Caco-2 (cell line): ENCODE measurements at regions of chr20 and their contacts with region 1.

Region 1: GRCh38 chr20:33992923-33993575 is 662 bp upstream of the RALY start:
- DNase-seq: peak; percentile 100
- H3K4me3 ChIP-seq: peak overlapping the region; percentile 88
- H3K4me3 Mint-ChIP-seq: peak overlapping the region; percentile 76
- H3K27ac Mint-ChIP-seq: peak overlapping the region; percentile 89
- H3K4me1 ChIP-seq: peaks cover 17% of the 10 kb centered on the region
- H3K4me1 Mint-ChIP-seq: peaks cover 3% of the 10 kb centered on the region
- H3K27me3 ChIP-seq: no peaks in the 10 kb centered on the region
- H3K27me3 Mint-ChIP-seq: no peaks in the 10 kb centered on the region
- CTCF ChIP-seq: no peak

Region 2: GRCh38 chr20:33666293-33667244 is 326.5 kb before region 1 on chr20 and contains the start of gene ACTL10:
- CTCF ChIA-PET with region 1: no interaction called
- POLR2A ChIA-PET with region 1: interaction called, 11 read pairs
- intact Hi-C with region 1: no loop called
- DNase-seq: peak; percentile 100
- H3K4me3 ChIP-seq: peak within 1 kb of the TSS; percentile 78
- H3K4me3 Mint-ChIP-seq: peak within 1 kb of the TSS; percentile 84
- H3K27ac Mint-ChIP-seq: peak within 1 kb of the TSS; percentile 85
- H3K4me1 ChIP-seq: peaks cover 25% of the 10 kb centered on the region
- H3K4me1 Mint-ChIP-seq: peaks cover 24% of the 10 kb centered on the region
- H3K27me3 ChIP-seq: no peaks in the 10 kb centered on the region
- H3K27me3 Mint-ChIP-seq: no peaks in the 10 kb centered on the region
- CTCF ChIP-seq: peak; percentile 19 to 64
- total RNA-seq, gene ACTL10: 3.4 and 4.5 TPM in 2 replicates

Region 3: GRCh38 chr20:33781133-33781532 is 211.9 kb before region 1 on chr20:
- CTCF ChIA-PET with region 1: no interaction called
- POLR2A ChIA-PET with region 1: interaction called, 11 read pairs
- intact Hi-C with region 1: no loop called
- DNase-seq: no peak
- H3K4me3 ChIP-seq: no peak overlapping the region
- H3K4me3 Mint-ChIP-seq: no peak overlapping the region
- H3K27ac Mint-ChIP-seq: no peak overlapping the region
- H3K4me1 ChIP-seq: peaks cover 13% of the 10 kb centered on the region
- H3K4me1 Mint-ChIP-seq: peaks cover 25% of the 10 kb centered on the region
- H3K27me3 ChIP-seq: no peaks in the 10 kb centered on the region
- H3K27me3 Mint-ChIP-seq: no peaks in the 10 kb centered on the region
- CTCF ChIP-seq: peak in 1 of 2 experiments; percentile 18

Region 4: GRCh38 chr20:33909331-33909921 is 83.6 kb before region 1 on chr20:
- CTCF ChIA-PET with region 1: interaction called, 5 read pairs
- POLR2A ChIA-PET with region 1: interaction called, 3 read pairs
- intact Hi-C with region 1: loop called (anchors 1 kb)
- DNase-seq: peak; percentile 86 to 88
- H3K4me3 ChIP-seq: no peak overlapping the region
- H3K4me3 Mint-ChIP-seq: peak overlapping the region; percentile 2
- H3K27ac Mint-ChIP-seq: peak overlapping the region; percentile 87
- H3K4me1 ChIP-seq: peaks cover 39% of the 10 kb centered on the region
- H3K4me1 Mint-ChIP-seq: peaks cover 41% of the 10 kb centered on the region
- H3K27me3 ChIP-seq: no peaks in the 10 kb centered on the region
- H3K27me3 Mint-ChIP-seq: no peaks in the 10 kb centered on the region
- CTCF ChIP-seq: no peak

Region 5: GRCh38 chr20:34022154-34022838 is 29.2 kb after region 1 on chr20:
- CTCF ChIA-PET with region 1: interaction called, 16 read pairs
- POLR2A ChIA-PET with region 1: interaction called, 15 read pairs
- intact Hi-C with region 1: no loop called
- DNase-seq: peak in 1 of 2 experiments; percentile 65
- H3K4me3 ChIP-seq: no peak overlapping the region
- H3K4me3 Mint-ChIP-seq: no peak overlapping the region
- H3K27ac Mint-ChIP-seq: no peak overlapping the region
- H3K4me1 ChIP-seq: no peaks in the 10 kb centered on the region
- H3K4me1 Mint-ChIP-seq: peaks cover 14% of the 10 kb centered on the region
- H3K27me3 ChIP-seq: no peaks in the 10 kb centered on the region
- H3K27me3 Mint-ChIP-seq: no peaks in the 10 kb centered on the region
- CTCF ChIP-seq: peak; percentile 51 to 72

Region 6: DNA sequence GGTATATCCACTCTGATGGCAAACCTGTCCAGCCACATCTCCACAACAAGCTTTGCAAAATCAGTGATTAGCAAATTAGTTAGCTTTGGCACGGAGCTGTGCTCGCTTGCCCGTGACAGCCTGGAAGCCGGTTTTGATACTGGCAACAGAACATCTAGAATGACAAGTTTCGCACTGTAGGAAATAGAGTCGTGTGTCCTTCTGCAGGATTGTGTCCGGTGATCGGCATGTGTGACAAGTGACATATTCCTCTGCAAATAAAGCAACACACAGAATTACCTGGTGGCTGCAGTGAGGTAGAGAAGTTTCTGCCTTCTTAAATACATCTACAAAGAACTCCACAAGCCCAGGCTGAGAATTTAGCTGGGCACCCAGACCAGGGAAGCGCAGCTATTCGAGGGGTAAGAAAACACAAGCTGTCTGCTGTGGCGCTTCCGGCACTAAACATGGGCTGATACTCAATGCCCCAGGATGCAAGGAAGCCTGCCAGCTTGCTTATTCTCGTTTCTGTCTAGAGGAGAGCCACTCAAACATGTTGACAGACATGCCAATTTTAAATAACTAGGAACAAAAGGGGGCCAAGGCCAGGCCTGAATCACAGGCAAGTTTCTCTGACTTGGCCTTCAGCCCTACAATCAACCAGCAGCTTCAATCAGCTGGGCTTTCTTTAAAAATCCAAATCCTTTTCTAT is 96.8 kb after region 1 on chr20:
- CTCF ChIA-PET with region 1: no interaction called
- POLR2A ChIA-PET with region 1: no interaction called
- intact Hi-C with region 1: no loop called
- DNase-seq: peak in 1 of 2 experiments; percentile 31
- H3K4me3 ChIP-seq: no peak overlapping the region
- H3K4me3 Mint-ChIP-seq: no peak overlapping the region
- H3K27ac Mint-ChIP-seq: peak overlapping the region; percentile 19
- H3K4me1 ChIP-seq: no peaks in the 10 kb centered on the region
- H3K4me1 Mint-ChIP-seq: no peaks in the 10 kb centered on the region
- H3K27me3 ChIP-seq: no peaks in the 10 kb centered on the region
- H3K27me3 Mint-ChIP-seq: no peaks in the 10 kb centered on the region
- CTCF ChIP-seq: no peak

Region 7: GRCh38 chr20:34516247-34517113 is 523.4 kb after region 1 on chr20 and contains the start of gene DYNLRB1:
- CTCF ChIA-PET with region 1: no interaction called
- POLR2A ChIA-PET with region 1: interaction called, 10 read pairs
- intact Hi-C with region 1: no loop called
- DNase-seq: peak; percentile 100
- H3K4me3 ChIP-seq: peak within 1 kb of the TSS; percentile 52
- H3K4me3 Mint-ChIP-seq: peak within 1 kb of the TSS; percentile 85
- H3K27ac Mint-ChIP-seq: peak within 1 kb of the TSS; percentile 91
- H3K4me1 ChIP-seq: peaks cover 6% of the 10 kb centered on the region
- H3K4me1 Mint-ChIP-seq: peaks cover 19% of the 10 kb centered on the region
- H3K27me3 ChIP-seq: no peaks in the 10 kb centered on the region
- H3K27me3 Mint-ChIP-seq: no peaks in the 10 kb centered on the region
- CTCF ChIP-seq: no peak
- total RNA-seq, gene DYNLRB1: 357 and 359 TPM in 2 replicates